ENCODE measurements at regions of chr2 and their contacts with region 1.

Region 1: DNA sequence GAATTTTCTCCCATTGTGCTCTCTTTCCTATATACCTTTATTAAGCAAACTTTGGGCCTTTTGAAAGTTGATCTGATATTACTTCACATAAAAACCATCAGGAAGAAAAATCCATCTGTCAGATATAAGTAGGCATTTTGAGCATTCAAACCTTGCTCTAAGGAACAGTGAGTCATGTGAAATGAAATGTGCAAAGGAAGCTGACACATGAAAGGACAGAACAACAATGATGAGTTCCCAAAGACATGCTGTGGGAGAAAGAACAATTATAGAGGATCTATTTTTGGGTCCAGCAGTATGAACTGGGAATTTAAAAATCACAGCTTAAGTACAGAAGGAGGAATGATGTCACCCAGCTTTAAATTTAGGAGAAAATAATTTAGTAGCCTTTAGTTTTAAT is 18.1 kb downstream of the CALCRL start:
- DNase-seq: no peak
- ATAC-seq: no peak
- H3K4me3 ChIP-seq: no peak overlapping the region
- H3K27ac ChIP-seq: no peak overlapping the region
- H3K4me1 ChIP-seq: no peaks in the 10 kb centered on the region
- H3K27me3 ChIP-seq: no peaks in the 10 kb centered on the region
- CTCF ChIP-seq: no peak
- EP300 ChIP-seq: no peak
- POLR2A ChIP-seq: no peak
- RAD21 ChIP-seq: no peak

Region 2: GRCh38 chr2:187345338-187345737 is 84.7 kb before region 1 on chr2:
- CTCF ChIA-PET with region 1: no interaction called
- POLR2A ChIA-PET with region 1: no interaction called
- RAD21 ChIA-PET with region 1: no interaction called
- SMC1A ChIA-PET with region 1: no interaction called
- in situ Hi-C with region 1: no loop called
- intact Hi-C with region 1: no loop called
- DNase-seq: no peak
- ATAC-seq: no peak
- H3K4me3 ChIP-seq: no peak overlapping the region
- H3K27ac ChIP-seq: no peak overlapping the region
- H3K4me1 ChIP-seq: no peaks in the 10 kb centered on the region
- H3K27me3 ChIP-seq: no peaks in the 10 kb centered on the region
- CTCF ChIP-seq: no peak
- EP300 ChIP-seq: no peak
- POLR2A ChIP-seq: no peak
- RAD21 ChIP-seq: no peak

Region 3: DNA sequence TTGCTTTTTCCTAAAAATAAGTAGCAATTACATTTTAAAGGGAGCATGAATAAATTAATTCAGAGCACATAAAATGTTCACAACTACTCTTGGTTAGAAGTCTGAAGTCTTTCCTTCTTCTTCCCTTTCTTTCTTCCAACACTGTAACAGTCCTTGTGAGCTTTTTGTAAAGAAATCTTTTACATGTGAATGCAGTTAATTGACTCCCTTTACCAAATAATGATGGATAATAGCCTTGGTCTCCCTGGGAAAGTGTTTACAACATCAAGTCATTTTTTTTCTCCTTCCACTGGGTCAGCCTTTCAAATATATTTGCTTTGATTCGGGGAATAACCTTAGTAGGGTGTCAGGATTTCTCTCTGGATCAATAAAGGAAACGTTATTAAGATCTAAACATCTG is 21.1 kb before region 1 on chr2:
- CTCF ChIA-PET with region 1: interaction called, 3 read pairs
- POLR2A ChIA-PET with region 1: interaction called, 3 read pairs
- RAD21 ChIA-PET with region 1: interaction called, 5 read pairs
- SMC1A ChIA-PET with region 1: interaction called, 7 read pairs
- in situ Hi-C with region 1: no loop called
- intact Hi-C with region 1: loop called (anchors 2 kb)
- DNase-seq: no peak
- ATAC-seq: no peak
- H3K4me3 ChIP-seq: no peak overlapping the region
- H3K27ac ChIP-seq: no peak overlapping the region
- H3K4me1 ChIP-seq: no peaks in the 10 kb centered on the region
- H3K27me3 ChIP-seq: no peaks in the 10 kb centered on the region
- CTCF ChIP-seq: no peak
- EP300 ChIP-seq: no peak
- POLR2A ChIP-seq: no peak
- RAD21 ChIP-seq: no peak

Region 4: DNA sequence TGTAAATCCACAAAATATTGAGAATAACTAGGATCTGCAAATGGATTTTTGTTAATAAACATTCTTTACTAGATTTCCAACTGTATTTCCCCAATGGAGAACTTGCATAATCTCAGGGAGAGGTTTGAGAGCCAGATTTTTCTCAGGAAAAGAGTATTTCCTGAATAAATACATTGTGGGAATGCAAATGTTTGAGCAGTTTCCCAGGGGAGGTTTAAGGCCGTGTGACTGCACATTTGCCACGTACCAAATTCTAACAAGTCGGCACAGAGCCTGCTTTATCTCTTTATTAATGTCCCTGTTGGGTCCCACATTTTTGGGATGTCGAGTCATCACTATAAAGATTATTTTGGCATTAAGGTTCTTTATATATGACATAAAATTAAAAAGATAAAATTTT is 97.3 kb after region 1 on chr2:
- CTCF ChIA-PET with region 1: no interaction called
- POLR2A ChIA-PET with region 1: no interaction called
- RAD21 ChIA-PET with region 1: no interaction called
- SMC1A ChIA-PET with region 1: no interaction called
- in situ Hi-C with region 1: no loop called
- intact Hi-C with region 1: no loop called
- DNase-seq: no peak
- ATAC-seq: no peak
- H3K4me3 ChIP-seq: no peak overlapping the region
- H3K27ac ChIP-seq: no peak overlapping the region
- H3K4me1 ChIP-seq: no peaks in the 10 kb centered on the region
- H3K27me3 ChIP-seq: no peaks in the 10 kb centered on the region
- CTCF ChIP-seq: no peak
- EP300 ChIP-seq: no peak
- POLR2A ChIP-seq: no peak
- RAD21 ChIP-seq: no peak

Region 5: GRCh38 chr2:188244383-188244782 is 814.4 kb after region 1 on chr2:
- CTCF ChIA-PET with region 1: no interaction called
- POLR2A ChIA-PET with region 1: no interaction called
- RAD21 ChIA-PET with region 1: no interaction called
- SMC1A ChIA-PET with region 1: no interaction called
- in situ Hi-C with region 1: no loop called
- intact Hi-C with region 1: no loop called
- DNase-seq: no peak
- ATAC-seq: no peak
- H3K4me3 ChIP-seq: no peak overlapping the region
- H3K27ac ChIP-seq: no peak overlapping the region
- H3K4me1 ChIP-seq: no peaks in the 10 kb centered on the region
- H3K27me3 ChIP-seq: no peaks in the 10 kb centered on the region
- CTCF ChIP-seq: no peak
- EP300 ChIP-seq: no peak
- POLR2A ChIP-seq: no peak
- RAD21 ChIP-seq: no peak

Measured in GM12878 (cell line).